Right ventricle myocardium inferior (tissue), 1 donor: ENCODE measurements at regions of chr14 and their contacts with region 1.

Region 1: DNA sequence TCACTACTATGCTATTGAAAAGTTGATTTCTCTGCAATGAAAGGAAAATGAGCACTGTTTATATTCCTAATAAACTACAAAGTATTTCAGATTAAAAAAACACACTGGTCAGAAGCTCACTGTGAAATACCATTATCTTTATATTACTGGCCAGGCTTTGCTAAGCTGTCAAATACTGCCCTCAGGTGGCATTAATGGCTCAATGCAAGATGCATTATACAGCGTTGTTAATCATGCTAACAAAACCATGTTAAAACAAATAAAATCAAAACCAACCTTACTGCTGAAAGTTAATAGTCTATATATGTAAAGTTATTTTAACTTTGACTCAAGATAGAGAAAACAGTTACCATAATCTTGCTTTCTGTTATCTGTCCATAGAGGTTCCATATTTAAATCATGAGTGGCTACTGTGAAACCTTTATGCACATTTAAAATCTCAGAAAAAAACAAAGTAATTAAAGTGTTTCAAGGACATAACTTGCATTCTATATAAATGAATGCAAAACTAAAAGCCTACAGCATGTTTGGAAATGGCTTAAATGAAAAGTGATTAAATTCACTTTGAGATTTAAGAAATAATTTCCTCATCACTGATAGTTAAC is 121.7 kb downstream of the RALGAPA1 start:
- DNase-seq: no peak
- ATAC-seq: no peak

Region 2: DNA sequence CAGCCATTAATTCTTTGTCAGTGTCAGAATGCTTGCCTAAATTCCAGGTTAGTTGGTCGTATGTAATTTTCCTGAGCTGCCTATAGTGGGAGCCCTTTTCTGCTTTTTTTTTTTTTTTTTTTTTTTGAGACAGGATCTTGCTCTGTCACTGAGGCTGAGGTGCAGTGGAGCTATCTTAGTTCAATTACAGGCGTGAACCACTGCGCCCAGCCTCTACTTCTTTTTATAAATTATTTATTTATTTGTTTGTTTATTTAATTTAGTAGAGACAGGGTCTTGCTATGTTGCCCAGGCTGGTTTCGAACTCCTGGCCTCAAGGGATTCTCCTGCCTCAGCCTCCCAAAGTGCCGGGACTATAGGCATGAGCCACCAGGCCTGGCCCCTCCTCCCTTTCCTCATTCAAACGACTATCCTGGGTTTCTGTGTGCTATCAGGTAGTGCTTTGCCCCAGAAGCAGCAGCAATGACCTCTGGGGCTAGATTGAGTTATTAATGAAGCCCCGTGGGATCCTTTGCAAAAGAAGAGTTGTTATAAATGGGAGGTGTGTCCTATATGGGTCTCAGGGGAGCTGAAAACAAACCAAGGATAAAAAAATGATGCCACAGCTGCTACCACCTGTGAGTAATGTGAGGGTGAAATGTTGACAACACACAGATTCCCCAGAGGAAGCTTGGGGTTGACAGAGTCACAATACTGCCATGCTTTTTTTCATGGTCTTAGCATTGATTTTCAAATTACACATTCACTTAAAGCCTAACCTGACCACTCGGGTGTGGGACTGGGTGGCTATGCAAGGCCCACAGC is 248.3 kb before region 1 on chr14:
- intact Hi-C with region 1: loop called (anchors 10 kb)
- DNase-seq: no peak
- ATAC-seq: no peak

Region 3: GRCh38 chr14:35814371-35815005 is 127.1 kb after region 1 on chr14:
- intact Hi-C with region 1: loop called (anchors 5 kb)
- DNase-seq: no peak
- ATAC-seq: no peak

Region 4: GRCh38 chr14:35963209-35963608 is 275.8 kb after region 1 on chr14:
- intact Hi-C with region 1: no loop called
- DNase-seq: no peak
- ATAC-seq: no peak